Calu3 (cell line): ENCODE measurements at regions of chr18 and their contacts with region 1.

Region 1: GRCh38 chr18:48475635-48476549 is 62.9 kb upstream of the CTIF start:
- DNase-seq: peak; percentile 68
- H3K4me3 Mint-ChIP-seq: no peak overlapping the region
- H3K27ac Mint-ChIP-seq: no peak overlapping the region
- H3K4me1 Mint-ChIP-seq: no peaks in the 10 kb centered on the region
- H3K27me3 Mint-ChIP-seq: peaks cover 39% of the 10 kb centered on the region
- CTCF ChIP-seq: peak; percentile 82

Region 2: GRCh38 chr18:48488388-48488850 is 12.5 kb after region 1 on chr18:
- CTCF ChIA-PET with region 1: interaction called, 12 read pairs
- intact Hi-C with region 1: no loop called
- DNase-seq: peak; percentile 88
- H3K4me3 Mint-ChIP-seq: no peak overlapping the region
- H3K27ac Mint-ChIP-seq: peak overlapping the region; percentile 73
- H3K4me1 Mint-ChIP-seq: peaks cover 52% of the 10 kb centered on the region
- H3K27me3 Mint-ChIP-seq: no peaks in the 10 kb centered on the region
- CTCF ChIP-seq: no peak

Region 3: GRCh38 chr18:48540251-48541025 is 64.5 kb after region 1 on chr18:
- CTCF ChIA-PET with region 1: no interaction called
- intact Hi-C with region 1: loop called (anchors 2 kb)
- DNase-seq: peak; percentile 73
- H3K4me3 Mint-ChIP-seq: peak overlapping the region; percentile 97
- H3K27ac Mint-ChIP-seq: no peak overlapping the region
- H3K4me1 Mint-ChIP-seq: peaks cover 10% of the 10 kb centered on the region
- H3K27me3 Mint-ChIP-seq: no peaks in the 10 kb centered on the region
- CTCF ChIP-seq: peak; percentile 18

Region 4: DNA sequence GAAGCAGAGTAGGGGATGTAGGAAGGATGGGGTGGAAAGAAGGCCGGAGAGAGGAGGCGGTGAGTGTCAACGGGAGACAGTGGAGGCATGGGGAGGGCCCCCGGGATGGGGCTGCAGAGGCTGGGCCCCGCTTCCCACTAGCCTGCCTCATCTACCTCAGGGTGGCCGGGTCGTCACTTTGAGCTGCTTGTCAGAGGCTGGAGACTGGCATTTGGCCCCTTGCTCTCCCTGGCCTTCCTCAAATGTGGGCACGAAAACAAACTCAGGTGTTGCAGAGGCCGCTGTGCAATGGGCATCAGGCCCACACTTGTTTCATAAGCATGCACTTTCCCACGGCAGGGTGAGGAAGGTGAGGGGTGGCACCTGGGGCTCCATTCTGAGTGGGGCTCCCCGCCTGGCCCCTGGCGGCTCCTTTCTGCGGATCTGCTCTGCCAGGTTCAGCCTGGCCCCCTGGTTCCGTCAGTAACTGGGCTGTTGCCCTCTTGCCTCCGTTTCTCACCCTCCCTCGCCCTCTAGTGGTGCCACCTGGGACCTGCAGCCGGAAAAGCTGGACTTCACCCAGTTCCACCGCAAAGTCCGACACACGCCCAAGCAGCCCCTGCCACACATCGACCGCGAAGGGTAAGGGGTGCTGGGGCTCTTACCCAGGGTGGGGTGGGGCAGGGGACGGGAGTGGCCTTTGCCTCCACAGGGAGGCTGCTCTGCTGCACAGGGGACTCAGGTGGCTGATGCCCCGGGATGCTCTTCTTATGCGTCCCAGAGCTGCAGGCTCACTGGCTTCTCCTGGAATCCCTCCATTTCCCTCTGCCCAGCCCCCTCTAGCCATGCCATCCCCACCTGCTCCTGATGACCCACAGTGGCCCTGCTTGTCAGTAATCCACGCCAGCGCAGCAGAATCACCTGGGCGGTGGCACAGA is 188.3 kb after region 1 on chr18:
- CTCF ChIA-PET with region 1: interaction called, 14 read pairs
- intact Hi-C with region 1: loop called (anchors 1 kb)
- DNase-seq: peak; percentile 87
- H3K4me3 Mint-ChIP-seq: no peak overlapping the region
- H3K27ac Mint-ChIP-seq: no peak overlapping the region
- H3K4me1 Mint-ChIP-seq: peaks cover 45% of the 10 kb centered on the region
- H3K27me3 Mint-ChIP-seq: no peaks in the 10 kb centered on the region
- CTCF ChIP-seq: peak; percentile 95

Region 5: GRCh38 chr18:49238433-49239042 is 762.6 kb after region 1 on chr18:
- CTCF ChIA-PET with region 1: no interaction called
- intact Hi-C with region 1: loop called (anchors 10 kb)
- DNase-seq: peak; percentile 36
- H3K4me3 Mint-ChIP-seq: no peak overlapping the region
- H3K27ac Mint-ChIP-seq: no peak overlapping the region
- H3K4me1 Mint-ChIP-seq: no peaks in the 10 kb centered on the region
- H3K27me3 Mint-ChIP-seq: no peaks in the 10 kb centered on the region
- CTCF ChIP-seq: peak; percentile 62